PC-9 (cell line): ENCODE measurements at regions of chr12 and their contacts with region 1.

Region 1: GRCh38 chr12:92145731-92146496 is at the start of gene BTG1:
- DNase-seq: peak; percentile 98
- H3K4me3 ChIP-seq: peak within 1 kb of the TSS; percentile 86
- H3K27ac ChIP-seq: peak within 1 kb of the TSS; percentile 96
- H3K4me1 ChIP-seq: peaks cover 42% of the 10 kb centered on the region
- H3K27me3 ChIP-seq: no peaks in the 10 kb centered on the region
- CTCF ChIP-seq: no peak
- total RNA-seq, gene BTG1: 72.4 and 111 TPM in 2 replicates

Region 2: GRCh38 chr12:91382081-91382543 is 763.8 kb before region 1 on chr12:
- CTCF ChIA-PET with region 1: no interaction called
- POLR2A ChIA-PET with region 1: no interaction called
- intact Hi-C with region 1: loop called (anchors 2 kb)
- DNase-seq: peak; percentile 51 to 67
- H3K4me3 ChIP-seq: no peak overlapping the region
- H3K27ac ChIP-seq: no peak overlapping the region
- H3K4me1 ChIP-seq: peaks cover 9% of the 10 kb centered on the region
- H3K27me3 ChIP-seq: no peaks in the 10 kb centered on the region
- CTCF ChIP-seq: peak; percentile 96

Region 3: GRCh38 chr12:91617830-91618702 is 527.8 kb before region 1 on chr12:
- CTCF ChIA-PET with region 1: no interaction called
- POLR2A ChIA-PET with region 1: interaction called, 3 read pairs
- intact Hi-C with region 1: loop called (anchors 5 kb)
- DNase-seq: peak; percentile 5 to 74
- H3K4me3 ChIP-seq: peak overlapping the region; percentile 10; the same call in 1 of the 2 replicates
- H3K27ac ChIP-seq: peak overlapping the region; percentile 86
- H3K4me1 ChIP-seq: peaks cover 19% of the 10 kb centered on the region
- H3K27me3 ChIP-seq: no peaks in the 10 kb centered on the region
- CTCF ChIP-seq: no peak

Region 4: GRCh38 chr12:91883781-91884180 is 262.1 kb before region 1 on chr12:
- CTCF ChIA-PET with region 1: no interaction called
- POLR2A ChIA-PET with region 1: interaction called, 5 read pairs
- intact Hi-C with region 1: loop called (anchors 2 kb)
- DNase-seq: no peak
- H3K4me3 ChIP-seq: no peak overlapping the region
- H3K27ac ChIP-seq: no peak overlapping the region
- H3K4me1 ChIP-seq: peaks cover 29% of the 10 kb centered on the region
- H3K27me3 ChIP-seq: no peaks in the 10 kb centered on the region
- CTCF ChIP-seq: no peak

Region 5: GRCh38 chr12:92123780-92124688 is 21.9 kb before region 1 on chr12:
- CTCF ChIA-PET with region 1: no interaction called
- POLR2A ChIA-PET with region 1: no interaction called
- intact Hi-C with region 1: no loop called
- DNase-seq: no peak
- H3K4me3 ChIP-seq: no peak overlapping the region
- H3K27ac ChIP-seq: no peak overlapping the region
- H3K4me1 ChIP-seq: 0 out of 2 replicates have a peak, but pooled peaks cover 7% of the 10 kb centered on the region
- H3K27me3 ChIP-seq: no peaks in the 10 kb centered on the region
- CTCF ChIP-seq: no peak

Region 6: GRCh38 chr12:92158796-92159439 is 13.0 kb after region 1 on chr12:
- CTCF ChIA-PET with region 1: interaction called, 8 read pairs
- POLR2A ChIA-PET with region 1: interaction called, 6 read pairs
- intact Hi-C with region 1: loop called (anchors 2 kb)
- DNase-seq: no peak
- H3K4me3 ChIP-seq: no peak overlapping the region
- H3K27ac ChIP-seq: no peak overlapping the region
- H3K4me1 ChIP-seq: peaks cover 25% of the 10 kb centered on the region
- H3K27me3 ChIP-seq: no peaks in the 10 kb centered on the region
- CTCF ChIP-seq: no peak

Region 7: DNA sequence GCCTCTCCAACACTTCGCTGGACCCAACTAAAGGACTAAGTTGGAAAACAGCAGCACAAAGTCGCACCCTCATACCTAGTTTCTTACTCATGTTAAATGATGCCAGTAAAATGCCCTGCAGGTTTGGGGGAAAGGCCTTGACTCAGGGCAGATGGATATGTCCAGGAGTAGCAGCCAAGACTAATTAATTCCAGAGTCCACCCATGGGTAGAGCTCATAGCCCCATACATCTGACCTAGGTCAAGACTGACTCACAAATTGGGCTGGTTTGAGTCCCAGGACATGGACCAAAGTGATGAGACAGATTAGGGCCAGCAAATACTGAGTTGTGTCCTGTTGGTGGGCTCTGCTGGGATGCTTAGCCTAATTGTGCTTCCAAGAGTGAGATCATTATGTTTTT is 223.7 kb after region 1 on chr12:
- CTCF ChIA-PET with region 1: no interaction called
- POLR2A ChIA-PET with region 1: interaction called, 19 read pairs
- intact Hi-C with region 1: loop called (anchors 10 kb)
- DNase-seq: peak; percentile 60 to 94
- H3K4me3 ChIP-seq: peak overlapping the region; percentile 35; the same call in 1 of the 2 replicates
- H3K27ac ChIP-seq: peak overlapping the region; percentile 96
- H3K4me1 ChIP-seq: peaks cover 39% of the 10 kb centered on the region
- H3K27me3 ChIP-seq: no peaks in the 10 kb centered on the region
- CTCF ChIP-seq: no peak

Region 8: DNA sequence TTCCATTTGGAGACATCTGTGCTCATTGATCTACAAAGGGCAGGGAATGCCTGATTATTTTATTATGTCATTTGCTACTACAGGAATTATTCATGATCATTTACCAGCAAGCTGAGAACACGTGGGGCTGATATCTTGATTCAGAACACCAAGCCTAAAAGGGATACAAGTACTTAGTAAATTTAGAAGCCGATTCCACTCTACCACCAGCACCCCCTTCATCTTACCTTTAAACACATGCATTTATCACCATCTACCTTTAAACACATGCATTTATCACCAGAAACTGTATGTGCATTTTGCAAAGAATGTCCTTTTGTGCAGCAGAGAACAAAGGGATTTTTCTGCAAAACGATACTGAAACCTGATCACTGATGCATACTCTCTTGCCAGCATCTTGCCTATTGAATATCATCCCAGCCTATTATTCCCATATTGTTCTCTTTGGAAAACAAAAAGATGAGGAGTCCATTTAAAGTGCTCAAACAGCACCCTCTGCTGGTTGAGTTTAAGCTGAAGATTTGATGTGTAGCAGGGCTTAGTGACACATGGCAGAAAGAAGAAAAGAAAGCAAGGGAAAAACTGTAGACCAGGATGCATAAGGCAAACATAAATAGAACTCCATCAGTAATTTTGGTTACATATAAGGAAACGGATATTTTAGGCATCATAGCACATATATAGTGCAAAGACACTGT is 424.3 kb after region 1 on chr12:
- CTCF ChIA-PET with region 1: interaction called, 3 read pairs
- POLR2A ChIA-PET with region 1: interaction called, 36 read pairs
- intact Hi-C with region 1: loop called (anchors 1 kb)
- DNase-seq: peak; percentile 54 to 61
- H3K4me3 ChIP-seq: no peak overlapping the region
- H3K27ac ChIP-seq: no peak overlapping the region
- H3K4me1 ChIP-seq: 0 out of 2 replicates have a peak, but pooled peaks cover 5% of the 10 kb centered on the region
- H3K27me3 ChIP-seq: no peaks in the 10 kb centered on the region
- CTCF ChIP-seq: peak; percentile 93